GM10248 (cell line): ENCODE measurements at regions of chr22 and their contacts with region 1.

Region 1: GRCh38 chr22:29245637-29246385 is 22.0 kb downstream of the RHBDD3 start:
- DNase-seq: peak; percentile 87
- CTCF ChIP-seq: peak; percentile 98

Region 2: GRCh38 chr22:28505416-28506149 is 740.2 kb before region 1 on chr22:
- CTCF ChIA-PET with region 1: no interaction called
- POLR2A ChIA-PET with region 1: no interaction called
- DNase-seq: no peak
- CTCF ChIP-seq: no peak

Region 3: DNA sequence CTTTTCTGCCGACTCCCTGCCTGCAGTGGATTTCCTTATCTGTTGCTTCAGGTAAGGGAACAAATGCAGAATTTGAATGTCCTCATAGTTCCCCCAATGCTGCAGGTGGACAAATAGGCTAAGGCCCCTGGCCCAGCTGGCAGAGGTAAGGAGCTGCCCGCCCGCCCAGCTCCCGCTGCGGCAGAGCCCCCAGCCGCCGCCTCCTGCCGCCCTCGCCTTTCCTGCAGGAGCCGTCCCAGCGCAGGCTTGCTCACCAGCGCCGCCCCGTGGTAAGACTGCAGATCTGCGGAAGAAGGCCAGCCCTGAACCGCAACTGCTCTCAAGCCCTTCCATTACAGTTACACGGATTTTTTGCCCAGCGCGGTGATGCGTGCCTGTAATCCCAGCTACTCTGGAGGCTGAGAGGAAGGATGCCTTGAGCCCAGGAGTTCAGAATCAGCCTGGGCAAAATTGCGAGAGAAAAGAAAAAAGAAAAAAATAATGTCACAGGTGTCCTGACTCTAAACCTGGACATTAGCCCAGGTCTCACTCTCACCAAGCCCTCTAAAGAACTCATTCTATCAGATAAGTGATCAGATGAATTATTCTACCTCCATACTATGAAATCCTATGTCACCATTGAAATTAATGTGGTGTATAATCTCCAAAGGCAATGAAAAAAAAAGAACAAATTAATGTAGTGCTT is 91.3 kb before region 1 on chr22:
- CTCF ChIA-PET with region 1: interaction called, 22 read pairs
- POLR2A ChIA-PET with region 1: no interaction called
- DNase-seq: peak; percentile 88
- CTCF ChIP-seq: peak; percentile 99

Region 4: DNA sequence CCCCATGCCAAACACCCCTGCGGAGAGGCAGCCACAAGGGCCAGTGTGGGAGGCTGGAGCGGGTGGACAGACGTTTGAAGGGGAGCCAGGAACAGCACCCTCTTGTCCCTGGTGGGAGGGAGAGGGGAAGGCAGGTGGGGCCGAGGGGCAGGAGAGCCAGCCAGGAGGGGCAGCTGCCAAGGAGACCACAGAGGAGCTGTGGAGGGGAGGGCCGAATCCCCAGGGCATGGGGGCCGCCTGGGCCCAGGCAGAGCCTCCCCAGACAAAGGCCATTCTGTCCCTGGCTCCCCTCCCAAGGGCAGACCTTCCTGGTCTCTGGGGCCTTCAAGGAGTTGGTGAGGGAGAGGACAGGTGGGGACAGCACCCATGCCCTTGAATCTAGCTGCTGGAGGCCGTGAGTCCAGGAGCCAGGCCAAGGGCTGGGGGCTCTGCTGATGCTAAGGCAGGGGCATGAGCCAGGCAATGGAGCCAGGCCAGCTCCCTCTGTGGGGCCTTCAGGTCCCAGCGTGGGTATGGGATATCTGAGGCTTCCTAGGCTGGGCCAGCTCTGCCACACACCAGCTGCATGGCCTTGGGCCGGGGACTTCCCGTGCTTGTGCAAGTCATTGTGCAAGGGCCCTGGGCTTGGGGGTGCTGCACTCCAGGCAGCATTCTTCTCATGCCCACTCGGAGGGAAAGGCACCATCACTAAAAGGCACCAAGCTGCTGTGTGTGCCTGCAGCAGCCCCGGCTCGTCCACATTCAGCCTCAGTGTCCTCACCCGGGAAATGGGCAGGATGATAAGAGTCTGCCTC is 28.7 kb before region 1 on chr22:
- CTCF ChIA-PET with region 1: interaction called, 16 read pairs
- POLR2A ChIA-PET with region 1: no interaction called
- DNase-seq: no peak
- CTCF ChIP-seq: no peak

Region 5: DNA sequence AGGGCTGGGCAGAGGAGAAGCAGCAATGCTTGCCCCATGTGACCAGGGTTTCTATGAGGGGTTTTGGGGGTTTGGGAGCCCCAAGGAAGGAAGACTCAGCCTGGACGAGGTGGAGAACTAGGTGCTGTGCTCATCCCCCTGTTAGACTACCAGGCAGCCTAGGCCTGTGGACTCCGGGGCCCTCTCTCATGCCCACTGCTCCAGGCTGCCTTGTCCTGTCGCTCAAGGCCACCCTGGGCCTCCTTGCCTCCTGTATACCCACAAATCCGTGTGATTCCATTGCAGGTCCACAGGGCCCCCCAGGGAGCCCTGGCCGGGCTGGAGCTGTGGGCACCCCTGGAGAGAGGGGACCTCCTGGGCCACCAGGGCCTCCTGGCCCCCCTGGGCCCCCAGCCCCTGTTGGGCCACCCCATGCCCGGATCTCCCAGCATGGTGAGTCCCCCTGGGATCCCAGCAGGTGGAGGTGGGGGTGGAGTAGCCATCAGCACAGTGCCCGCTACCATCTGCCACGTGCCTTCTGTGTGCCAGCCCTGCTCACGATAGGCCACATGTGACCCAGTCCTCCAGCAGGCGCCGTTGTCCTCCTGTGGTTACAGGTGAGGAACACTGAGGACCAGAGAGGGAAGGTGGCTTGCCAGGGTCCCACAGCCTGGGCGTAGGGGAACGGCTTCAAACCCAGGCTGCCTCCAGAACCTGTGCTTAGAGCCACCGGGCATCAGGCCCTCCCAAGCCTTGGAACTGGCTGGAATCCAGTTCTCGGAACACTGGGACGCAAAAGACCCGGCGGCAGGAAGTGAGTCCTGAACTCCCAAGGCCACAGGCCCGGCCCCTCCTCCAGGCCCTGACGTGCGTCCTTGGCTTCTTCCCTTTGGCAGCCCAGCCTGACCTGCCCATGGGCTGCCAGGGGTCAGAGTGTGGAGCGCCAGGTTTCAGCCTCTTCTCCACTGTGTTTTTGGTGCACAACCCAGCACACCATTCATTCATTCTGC is 13.5 kb before region 1 on chr22:
- CTCF ChIA-PET with region 1: interaction called, 47 read pairs
- POLR2A ChIA-PET with region 1: no interaction called
- DNase-seq: no peak
- CTCF ChIP-seq: no peak

Region 6: GRCh38 chr22:29267858-29268417 is 22.1 kb after region 1 on chr22 and contains the starts of genes EWSR1 and RHBDD3:
- CTCF ChIA-PET with region 1: interaction called, 19 read pairs
- POLR2A ChIA-PET with region 1: no interaction called
- DNase-seq: peak; percentile 95
- CTCF ChIP-seq: no peak

Region 7: DNA sequence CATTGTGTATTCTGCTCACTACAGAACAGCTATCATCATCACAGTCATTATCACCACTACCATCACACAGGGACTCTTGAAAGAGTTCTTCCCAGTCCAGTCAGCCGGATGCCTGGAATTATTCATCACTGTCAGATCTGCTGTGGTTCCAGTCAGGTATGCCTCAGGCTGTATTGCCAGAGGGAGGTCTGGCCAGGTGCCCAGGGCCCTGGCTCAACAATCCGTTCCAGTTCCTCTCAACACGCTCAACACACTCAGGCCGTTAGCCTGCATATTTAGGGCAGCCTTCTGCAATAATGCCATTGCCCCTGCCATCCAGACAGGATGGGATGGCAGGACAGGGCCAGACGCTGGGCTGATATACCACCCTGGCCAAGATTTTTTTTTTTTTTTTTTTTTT is 98.3 kb after region 1 on chr22:
- CTCF ChIA-PET with region 1: no interaction called
- POLR2A ChIA-PET with region 1: no interaction called
- DNase-seq: no peak
- CTCF ChIP-seq: no peak

Region 8: GRCh38 chr22:29470159-29470855 is 224.5 kb after region 1 on chr22:
- CTCF ChIA-PET with region 1: no interaction called
- POLR2A ChIA-PET with region 1: no interaction called
- DNase-seq: peak; percentile 80
- CTCF ChIP-seq: peak; percentile 80